OCI-LY7 (cell line): ENCODE measurements at regions of chr2 and their contacts with region 1.

Region 1: DNA sequence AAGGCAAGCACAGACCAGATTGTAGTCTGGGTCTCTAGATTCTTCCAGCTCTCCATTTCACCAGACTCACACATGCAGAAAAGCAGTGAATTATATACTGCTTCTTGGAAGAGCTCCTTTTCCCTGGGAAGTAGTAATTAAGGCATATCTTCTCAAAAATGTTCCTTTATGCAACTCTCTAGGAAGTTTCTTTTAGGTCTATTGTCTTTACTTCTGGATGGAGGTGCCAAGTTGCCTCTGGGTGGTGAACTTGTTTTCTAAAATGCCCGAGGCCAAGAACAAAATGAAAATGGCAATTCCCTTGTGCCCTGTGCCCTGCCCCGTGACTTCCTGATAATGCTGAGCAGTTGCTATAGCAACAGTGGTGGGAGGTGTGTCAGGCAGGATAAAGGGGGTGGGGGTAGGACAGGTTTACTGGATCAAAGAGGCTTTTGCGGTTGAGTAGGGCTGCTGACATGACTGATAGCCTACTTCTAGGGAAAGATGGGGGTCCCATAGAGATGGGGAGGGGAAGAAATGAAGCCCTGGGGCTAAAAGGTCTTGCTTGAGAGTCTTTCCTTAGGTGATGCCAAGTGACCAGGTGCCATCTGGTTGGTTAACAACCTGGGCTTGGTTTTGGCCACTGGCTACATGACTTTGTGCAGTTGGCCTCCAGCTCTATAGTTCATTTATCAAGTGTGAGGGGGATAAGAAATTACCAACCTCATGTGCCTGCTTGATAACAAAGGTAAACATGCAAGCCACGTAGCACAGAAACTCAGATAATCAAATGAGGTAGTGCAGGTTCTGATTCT is 11.8 kb downstream of the IGFBP2 start:
- DNase-seq: peak; percentile 6
- H3K4me3 ChIP-seq: no peak overlapping the region
- H3K27ac ChIP-seq: no peak overlapping the region
- H3K4me1 ChIP-seq: peaks cover 5% of the 10 kb centered on the region
- CTCF ChIP-seq: no peak

Region 2: GRCh38 chr2:216532562-216532961 is 112.5 kb before region 1 on chr2:
- CTCF ChIA-PET with region 1: no interaction called
- POLR2A ChIA-PET with region 1: interaction called, 10 read pairs
- intact Hi-C with region 1: no loop called
- DNase-seq: no peak
- H3K4me3 ChIP-seq: no peak overlapping the region
- H3K27ac ChIP-seq: no peak overlapping the region
- H3K4me1 ChIP-seq: no peaks in the 10 kb centered on the region
- CTCF ChIP-seq: no peak